ENCODE measurements at regions of chr6 and their contacts with region 1.

Region 1: DNA sequence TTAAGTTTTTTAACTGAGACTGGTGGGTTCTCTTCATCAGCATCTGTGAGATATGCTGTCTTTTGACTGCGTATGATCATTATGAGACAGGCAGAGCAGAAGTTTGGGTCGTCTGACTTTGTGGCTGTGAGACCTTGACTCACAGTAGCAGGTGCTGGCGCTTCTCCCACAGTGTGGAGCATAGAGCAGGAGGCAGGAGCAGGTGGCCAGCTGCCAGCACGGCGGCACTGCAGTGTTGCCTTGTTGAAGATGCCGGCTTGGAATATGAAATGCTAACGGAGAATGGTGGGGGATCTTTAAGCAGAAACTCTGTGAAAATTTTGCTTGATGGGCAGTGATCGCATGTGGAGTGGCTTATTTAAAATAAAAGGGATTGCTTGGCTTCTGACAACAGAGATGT is 105.0 kb downstream of the TIAM2 start:
- DNase-seq: no peak
- H3K4me3 ChIP-seq: no peak overlapping the region
- H3K27ac ChIP-seq: no peak overlapping the region
- H3K4me1 ChIP-seq: no peaks in the 10 kb centered on the region
- H3K27me3 ChIP-seq: no peaks in the 10 kb centered on the region
- CTCF ChIP-seq: no peak
- POLR2A ChIP-seq: no peak

Region 2: DNA sequence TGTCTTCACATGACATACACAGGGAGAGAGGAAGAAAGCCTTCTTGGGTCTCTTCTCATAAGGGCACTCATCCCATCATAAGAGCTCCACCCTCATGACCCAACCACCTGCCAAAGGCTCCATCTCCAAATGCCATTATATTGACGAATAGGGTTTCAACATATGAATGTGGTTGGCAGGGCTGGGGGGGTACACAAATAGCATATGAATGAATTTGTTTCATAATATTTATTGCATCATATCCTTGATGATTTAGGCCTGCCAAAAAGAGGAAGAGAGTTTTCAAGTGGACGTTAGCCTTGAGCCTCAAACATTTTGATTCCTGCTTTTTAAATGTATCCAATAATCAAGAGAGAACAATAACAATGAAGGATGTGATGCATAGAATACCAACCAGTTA is 1087.2 kb before region 1 on chr6:
- intact Hi-C with region 1: loop called (anchors 10 kb)
- DNase-seq: no peak
- H3K4me3 ChIP-seq: no peak overlapping the region
- H3K27ac ChIP-seq: no peak overlapping the region
- H3K4me1 ChIP-seq: no peaks in the 10 kb centered on the region
- H3K27me3 ChIP-seq: no peaks in the 10 kb centered on the region
- CTCF ChIP-seq: no peak
- POLR2A ChIP-seq: no peak

Region 3: GRCh38 chr6:155154158-155154830 is 54.2 kb after region 1 on chr6:
- intact Hi-C with region 1: no loop called
- DNase-seq: no peak
- H3K4me3 ChIP-seq: peak overlapping the region in 1 of 3 donors; percentile 5
- H3K27ac ChIP-seq: peak overlapping the region in 1 of 2 donors; percentile 69
- H3K4me1 ChIP-seq: no peaks in the 10 kb centered on the region
- H3K27me3 ChIP-seq: no peaks in the 10 kb centered on the region
- CTCF ChIP-seq: no peak
- POLR2A ChIP-seq: no peak

Measured in breast epithelium (tissue), 4 donors.